Activated naive CD4-positive, alpha-beta T cell treated with anti-CD3 and anti-CD28 coated beads, Interleukin-2, amount 10 ng/mL, durations not matched to agents 7 days and 5 days (primary cell): ENCODE measurements at regions of chr5 and their contacts with region 1.

Region 1: GRCh38 chr5:149680810-149681221 is 49.3 kb upstream of the PPARGC1B start:
- DNase-seq: no peak
- H3K4me3 Mint-ChIP-seq: no peak overlapping the region
- H3K27ac Mint-ChIP-seq: no peak overlapping the region
- H3K4me1 Mint-ChIP-seq: no peaks in the 10 kb centered on the region
- H3K27me3 Mint-ChIP-seq: peaks cover 56% of the 10 kb centered on the region

Region 2: GRCh38 chr5:149605998-149606724 is 74.7 kb before region 1 on chr5:
- CTCF ChIA-PET with region 1: no interaction called
- DNase-seq: no peak
- H3K4me3 Mint-ChIP-seq: no peak overlapping the region
- H3K27ac Mint-ChIP-seq: peak overlapping the region; percentile 34
- H3K4me1 Mint-ChIP-seq: peaks cover 16% of the 10 kb centered on the region
- H3K27me3 Mint-ChIP-seq: peaks cover 11% of the 10 kb centered on the region

Region 3: DNA sequence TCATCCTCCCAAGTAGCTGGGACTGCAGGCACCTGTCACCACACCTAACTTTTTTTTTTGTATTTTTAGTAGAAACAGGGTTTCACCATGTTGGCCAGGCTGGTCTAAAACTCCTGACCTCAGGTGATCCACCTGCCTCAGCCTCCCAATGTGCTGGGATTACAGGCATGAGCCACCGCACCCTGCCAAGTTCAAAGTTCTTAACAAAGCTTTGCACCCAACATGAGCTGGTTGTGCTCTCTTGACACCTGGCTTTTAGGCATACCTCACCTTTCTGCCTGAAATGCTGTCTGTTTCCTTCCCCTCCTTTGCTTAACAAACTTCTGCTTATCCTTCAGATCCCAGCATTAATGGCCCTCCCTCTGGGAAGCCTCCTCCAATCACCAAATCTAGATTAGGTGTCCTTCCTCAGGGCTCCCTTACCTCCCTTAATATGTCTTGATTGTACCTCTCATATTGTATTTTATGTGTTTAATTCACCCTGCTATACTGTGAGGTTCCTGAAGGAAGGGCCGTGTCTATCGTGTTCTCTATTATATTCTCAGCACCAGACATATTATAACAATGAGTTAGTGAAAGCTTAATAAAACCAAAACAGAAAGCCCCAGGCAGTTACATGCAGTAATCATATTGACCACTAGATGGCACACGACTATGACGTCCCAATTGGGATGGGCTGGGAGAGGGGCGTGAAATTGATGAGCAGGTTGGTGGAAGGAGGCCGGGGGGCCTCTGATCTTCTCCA is 13.6 kb before region 1 on chr5:
- CTCF ChIA-PET with region 1: interaction called, 15 read pairs
- DNase-seq: peak; percentile 47
- H3K4me3 Mint-ChIP-seq: no peak overlapping the region
- H3K27ac Mint-ChIP-seq: no peak overlapping the region
- H3K4me1 Mint-ChIP-seq: no peaks in the 10 kb centered on the region
- H3K27me3 Mint-ChIP-seq: peaks cover 4% of the 10 kb centered on the region

Region 4: DNA sequence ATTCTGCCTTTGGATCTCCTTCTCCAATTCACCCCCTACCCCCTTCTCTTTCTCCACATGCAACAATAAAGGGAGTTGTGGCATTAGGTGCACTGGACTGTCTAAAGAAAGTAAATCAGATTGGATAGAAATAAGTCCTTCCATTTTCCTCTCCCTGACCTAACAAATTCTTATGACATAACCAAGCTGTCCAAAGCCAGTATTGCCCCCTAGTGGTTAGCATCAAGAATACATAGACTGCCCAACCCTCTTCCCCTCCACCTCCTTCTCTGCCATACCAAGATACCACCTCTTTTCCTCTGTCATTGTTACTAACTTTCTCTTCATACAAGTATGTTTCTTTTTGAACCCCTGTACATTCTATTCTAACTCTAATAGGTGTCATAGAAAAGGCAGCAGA is 95.0 kb after region 1 on chr5:
- CTCF ChIA-PET with region 1: no interaction called
- DNase-seq: no peak
- H3K4me3 Mint-ChIP-seq: no peak overlapping the region
- H3K27ac Mint-ChIP-seq: no peak overlapping the region
- H3K4me1 Mint-ChIP-seq: peaks cover 20% of the 10 kb centered on the region
- H3K27me3 Mint-ChIP-seq: no peaks in the 10 kb centered on the region